ENCODE measurements at regions of chr16 and their contacts with region 1.

Region 1: DNA sequence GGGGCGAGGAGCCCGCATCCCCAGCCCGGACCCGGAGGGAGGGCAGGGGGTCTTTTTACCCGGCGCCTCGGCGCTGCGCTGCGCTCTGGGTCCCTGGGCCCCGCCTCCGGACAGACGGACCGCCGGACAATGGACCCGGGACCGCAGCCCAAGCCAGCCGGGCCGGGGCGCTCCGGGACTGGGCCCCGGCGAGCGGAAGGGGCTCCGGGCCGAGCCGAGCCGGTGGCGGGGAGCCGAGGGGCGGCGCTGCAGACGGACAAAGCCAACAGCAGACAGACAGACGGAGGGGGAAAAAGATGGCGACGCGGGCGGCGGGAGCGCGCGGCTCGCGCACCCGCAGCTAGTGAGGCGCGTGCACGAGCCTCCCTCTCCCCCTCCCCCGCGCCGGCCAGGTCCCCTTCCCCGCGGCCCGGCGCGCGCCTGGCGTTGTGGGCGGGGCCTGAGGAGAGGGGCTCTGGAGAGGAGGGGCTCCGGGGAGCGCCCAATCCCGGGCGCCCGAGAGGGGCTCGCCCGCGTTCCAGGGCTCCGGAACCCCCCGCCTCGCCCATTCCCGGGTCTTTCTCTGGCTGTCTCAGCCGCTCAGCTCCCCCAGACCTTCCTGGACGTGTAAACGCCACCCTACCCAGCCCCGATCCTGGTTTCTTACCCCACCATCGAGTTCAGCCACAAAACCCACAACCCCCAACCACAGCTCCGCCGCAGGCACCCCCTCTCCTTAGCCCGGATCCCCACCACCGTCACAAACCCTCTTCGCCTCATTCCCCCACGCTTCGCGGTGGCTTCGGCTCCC is at the start of gene ZNF821:
- DNase-seq: peak; percentile 90

Region 2: DNA sequence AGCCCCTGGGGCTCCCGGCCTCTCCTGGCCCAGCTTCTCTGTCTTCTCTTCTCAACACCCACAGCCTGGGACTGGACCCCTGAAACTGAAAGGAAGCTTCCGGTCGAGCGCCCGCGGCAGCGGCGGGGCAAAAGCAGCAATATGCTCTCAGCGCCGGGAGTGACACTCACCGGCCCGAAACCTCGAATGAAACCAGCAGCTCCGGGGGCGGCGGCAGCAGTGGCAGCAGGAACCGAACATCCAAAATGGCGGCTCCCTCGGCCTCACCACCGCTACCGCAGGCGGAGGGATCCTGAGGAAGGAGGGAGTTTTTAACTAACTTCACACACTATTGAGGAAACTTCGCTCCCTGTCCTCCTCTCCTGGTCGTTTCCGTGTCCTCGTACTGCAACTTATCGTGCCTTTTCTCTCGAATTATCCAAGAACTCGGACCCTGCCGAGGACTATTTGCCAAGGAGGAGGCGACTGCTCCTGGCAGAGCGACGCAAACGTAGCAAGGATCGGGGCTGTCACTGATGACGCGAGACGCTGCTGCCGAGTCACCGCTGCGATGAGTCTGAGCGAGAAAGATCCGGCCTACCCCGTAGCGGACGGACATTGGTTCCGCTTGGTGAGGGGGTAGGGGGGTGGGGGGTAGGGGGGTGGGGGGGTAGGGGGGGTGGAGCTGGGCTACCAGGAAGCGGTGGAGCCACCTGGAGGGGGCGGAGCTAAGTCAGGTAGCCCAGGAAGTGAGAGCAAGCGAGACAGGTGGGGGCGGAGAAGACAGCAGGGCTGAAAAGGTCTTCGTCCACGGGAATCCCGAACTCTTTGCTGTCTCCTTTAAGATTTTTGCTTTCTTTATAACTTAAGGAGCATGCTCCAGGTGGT is 75.2 kb before region 1 on chr16 and contains the start of gene AP1G1:
- CTCF ChIA-PET with region 1: interaction called, 8 read pairs
- POLR2A ChIA-PET with region 1: interaction called, 11 read pairs
- DNase-seq: peak; percentile 93

Region 3: DNA sequence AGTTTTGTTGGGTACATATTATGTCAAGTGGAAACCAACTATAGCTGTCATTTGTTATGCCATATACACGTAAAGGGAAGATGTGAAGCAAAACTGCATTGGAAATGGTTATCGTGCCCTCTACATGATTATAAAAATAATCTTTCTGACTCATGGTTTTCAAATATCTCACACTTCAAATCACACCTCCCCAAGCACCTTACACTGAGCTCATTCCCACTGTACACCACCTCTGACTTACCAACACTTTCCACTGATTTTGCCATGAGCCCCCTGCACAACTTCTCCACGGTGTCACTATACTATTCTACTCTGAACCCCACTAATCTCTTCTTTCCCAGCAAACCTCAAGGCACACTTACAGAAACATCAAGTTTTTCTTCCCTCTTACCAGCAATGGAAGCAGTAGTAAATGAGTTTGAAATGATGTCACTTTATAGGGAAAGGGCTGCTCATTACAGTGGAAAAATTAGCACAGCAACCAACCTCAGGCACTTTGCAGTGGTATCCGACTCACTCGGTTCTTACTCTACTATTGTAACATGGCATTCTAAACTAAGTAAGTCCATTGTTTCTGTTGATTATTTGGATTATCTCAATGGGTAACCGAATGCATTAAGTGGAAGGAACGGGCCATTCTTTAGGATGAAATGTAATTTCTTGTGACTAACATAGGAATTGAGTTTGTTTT is 18.7 kb before region 1 on chr16:
- CTCF ChIA-PET with region 1: interaction called, 14 read pairs
- POLR2A ChIA-PET with region 1: interaction called, 3 read pairs
- DNase-seq: no peak

Region 4: DNA sequence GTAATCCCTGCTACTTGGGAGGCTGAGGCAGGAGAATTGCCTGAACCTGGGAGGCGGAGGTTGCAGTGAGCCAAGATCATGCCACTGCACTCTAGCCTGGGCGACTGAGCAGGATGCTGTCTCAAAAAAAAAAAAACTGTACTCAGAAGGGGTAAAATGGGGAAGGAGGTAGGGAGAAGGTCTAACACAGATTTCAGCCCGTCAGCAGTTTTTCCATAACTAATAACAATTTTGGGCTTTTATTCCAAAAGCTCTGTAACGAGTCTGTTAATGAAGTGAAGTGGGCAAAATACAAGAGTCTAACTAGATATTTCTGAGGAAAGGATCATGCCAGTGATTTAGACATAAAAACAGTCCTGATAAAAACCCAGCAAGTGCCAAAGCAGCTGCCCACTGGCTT is 10.8 kb before region 1 on chr16:
- CTCF ChIA-PET with region 1: interaction called, 14 read pairs
- POLR2A ChIA-PET with region 1: interaction called, 4 read pairs
- DNase-seq: no peak

Region 5: GRCh38 chr16:71894921-71895678 is 11.1 kb after region 1 on chr16 and contains the start of gene IST1:
- CTCF ChIA-PET with region 1: interaction called, 7 read pairs
- POLR2A ChIA-PET with region 1: interaction called, 19 read pairs
- DNase-seq: peak; percentile 89

Region 6: GRCh38 chr16:71961066-71962039 is 77.3 kb after region 1 on chr16:
- CTCF ChIA-PET with region 1: interaction called, 11 read pairs
- POLR2A ChIA-PET with region 1: no interaction called
- DNase-seq: peak; percentile 79